ENCODE measurements at regions of chr9 and their contacts with region 1.

Region 1: DNA sequence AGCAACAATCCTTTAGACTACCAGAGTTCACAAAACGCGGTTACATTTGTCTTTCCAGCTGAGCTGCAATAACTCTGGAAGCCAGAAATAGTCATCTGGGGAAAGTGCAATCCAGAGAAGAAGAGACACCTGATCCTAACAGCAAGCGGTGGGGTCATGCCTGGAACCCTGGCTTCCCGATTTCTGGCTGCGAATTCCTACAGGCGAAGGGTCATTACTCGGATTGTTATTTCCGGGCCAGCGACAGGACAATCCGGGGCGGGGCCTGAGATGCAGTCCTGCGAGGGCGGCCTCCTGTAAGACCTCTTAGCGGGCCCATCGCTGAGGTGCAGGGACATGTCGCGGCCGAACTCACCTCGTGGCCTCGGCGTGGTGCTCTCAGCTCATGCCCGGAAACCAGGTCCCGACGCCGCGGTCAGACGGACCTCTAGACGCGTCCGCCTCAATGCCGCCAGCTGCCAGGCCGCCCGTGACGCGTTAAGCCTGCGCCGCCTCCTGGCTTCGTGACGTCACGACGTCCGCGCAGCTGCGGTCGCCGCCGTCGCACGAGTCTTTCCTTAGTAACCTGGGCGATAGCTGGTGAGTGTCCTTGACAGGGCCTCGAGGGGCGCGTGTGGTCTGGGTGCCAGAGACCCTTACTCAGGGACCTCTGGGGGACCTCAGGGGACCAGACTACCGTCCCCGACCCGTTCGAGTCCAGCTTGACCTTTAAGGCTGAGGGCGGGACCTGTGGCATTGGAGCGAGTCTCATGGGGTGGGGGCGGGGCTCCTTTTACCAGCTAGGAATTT is at the starts of genes MRRF and RBM18:
- DNase-seq: peak; percentile 73 to 96 (median 82)
- ATAC-seq: peak; percentile 82
- H3K4me3 ChIP-seq: peak within 1 kb of the TSS; percentile 86
- H3K4me3 Mint-ChIP-seq: peak within 1 kb of the TSS; percentile 90
- H3K27ac ChIP-seq: peak within 1 kb of the TSS; percentile 89 to 97
- H3K27ac Mint-ChIP-seq: peak within 1 kb of the TSS; percentile 94
- H3K4me1 ChIP-seq: peaks cover 29% of the 10 kb centered on the region
- H3K4me1 Mint-ChIP-seq: peaks cover 71% of the 10 kb centered on the region
- H3K27me3 ChIP-seq: no peaks in the 10 kb centered on the region
- H3K27me3 Mint-ChIP-seq: no peaks in the 10 kb centered on the region
- CTCF ChIP-seq: no peak
- total RNA-seq, gene MRRF: 18.4 to 18.7 TPM
- total RNA-seq, gene RBM18: 25.9 to 27.0 TPM

Region 2: DNA sequence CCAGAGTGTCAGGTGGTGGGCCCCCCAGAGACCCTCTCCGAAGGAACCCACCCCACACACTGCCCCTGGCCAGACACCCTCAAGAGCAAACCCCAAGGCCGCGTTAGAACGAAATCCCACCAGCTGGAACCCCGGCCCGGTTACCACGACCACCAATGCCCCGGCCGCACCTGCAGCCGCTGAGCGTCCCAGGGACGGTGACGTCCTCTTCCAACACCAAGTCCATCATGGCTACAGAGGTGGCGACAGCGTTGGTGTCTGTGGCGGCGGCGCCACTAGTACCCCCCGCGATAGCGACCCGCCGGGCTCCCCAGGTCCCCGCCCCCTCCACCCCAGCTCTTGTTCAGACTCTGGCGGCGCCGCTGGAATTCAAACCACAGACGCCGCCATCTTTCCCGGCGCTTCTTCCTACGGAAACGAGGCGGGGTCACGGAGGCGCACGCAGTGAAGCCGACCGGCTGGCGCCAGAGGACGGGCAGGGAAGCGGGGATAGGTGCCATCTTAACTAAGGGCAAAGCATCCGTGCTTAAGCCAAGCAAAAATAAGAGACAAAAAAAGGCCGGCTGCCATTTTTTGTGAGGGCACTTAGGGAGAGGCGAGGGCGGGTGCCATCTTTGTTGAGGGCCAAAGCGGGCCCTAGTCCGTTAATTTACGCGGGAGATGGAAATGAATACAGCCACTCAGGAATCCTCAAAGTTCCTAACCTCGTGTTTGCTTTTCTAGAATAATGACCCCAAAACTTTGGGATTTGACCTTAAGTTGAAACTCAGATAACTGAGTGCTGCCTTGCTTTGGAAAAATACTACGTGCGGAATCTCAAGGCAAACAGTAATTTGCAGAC is 1684.6 kb before region 1 on chr9 and contains the start of gene CDK5RAP2:
- CTCF ChIA-PET with region 1: no interaction called
- POLR2A ChIA-PET with region 1: no interaction called
- intact Hi-C with region 1: loop called in 1 of 2 experiments (anchors 10 kb)
- DNase-seq: peak; percentile 84 to 98 (median 90)
- ATAC-seq: peak; percentile 98
- H3K4me3 ChIP-seq: peak within 1 kb of the TSS; percentile 84
- H3K4me3 Mint-ChIP-seq: peak within 1 kb of the TSS; percentile 99
- H3K27ac ChIP-seq: peak within 1 kb of the TSS; percentile 26 to 55
- H3K27ac Mint-ChIP-seq: peak within 1 kb of the TSS; percentile 92
- H3K4me1 ChIP-seq: peaks cover 29% of the 10 kb centered on the region
- H3K4me1 Mint-ChIP-seq: peaks cover 48% of the 10 kb centered on the region
- H3K27me3 ChIP-seq: no peaks in the 10 kb centered on the region
- H3K27me3 Mint-ChIP-seq: no peaks in the 10 kb centered on the region
- CTCF ChIP-seq: no peak
- total RNA-seq, gene CDK5RAP2: 55.0 to 56.0 TPM

Region 3: DNA sequence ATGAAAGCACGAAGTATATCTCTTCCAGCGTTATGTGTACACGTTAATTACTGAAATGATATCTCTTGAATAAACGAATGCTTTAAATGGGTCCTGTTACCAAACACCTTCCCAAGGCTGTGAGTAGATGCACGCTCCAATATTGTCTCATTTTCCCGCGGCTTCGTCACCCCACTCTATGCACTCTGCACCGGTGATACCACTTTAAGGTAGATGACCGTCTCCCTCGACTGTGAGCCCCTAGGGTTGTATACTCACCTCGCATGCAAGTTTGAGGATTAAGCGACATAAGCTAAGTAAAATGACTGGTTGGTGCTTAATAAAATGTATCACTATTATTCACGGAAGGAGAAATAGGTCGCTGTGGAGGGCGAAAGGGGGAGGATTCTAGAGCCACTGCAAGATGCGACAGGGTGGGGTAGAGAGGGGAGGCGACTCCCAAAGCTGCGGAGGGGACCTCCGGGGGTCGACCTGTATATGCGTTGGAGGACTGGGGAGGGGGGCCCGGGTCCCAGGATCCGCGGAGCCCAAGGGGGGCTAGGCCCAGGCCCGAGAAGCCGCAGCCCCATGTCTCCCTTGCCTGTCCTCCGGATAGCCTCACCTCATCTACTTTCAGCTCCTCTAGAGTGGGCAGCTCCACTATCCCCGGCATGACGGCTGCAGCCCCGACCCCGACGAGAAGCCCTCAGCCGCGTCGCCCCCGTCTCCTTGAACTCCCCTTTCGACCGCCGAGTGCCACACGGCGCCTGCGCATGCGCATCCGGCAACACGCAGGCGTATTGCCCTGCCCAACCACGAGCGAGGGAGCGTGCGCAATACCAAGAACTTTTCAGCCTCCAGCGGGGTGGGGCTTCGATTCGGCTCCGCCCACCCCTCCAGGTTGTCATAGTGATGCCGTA is 105.3 kb before region 1 on chr9 and contains the starts of genes MORN5 and NDUFA8:
- CTCF ChIA-PET with region 1: no interaction called
- POLR2A ChIA-PET with region 1: interaction called, 5 read pairs
- intact Hi-C with region 1: loop called (anchors 1 to 2 kb)
- DNase-seq: peak; percentile 93 to 99 (median 96)
- ATAC-seq: peak; percentile 95
- H3K4me3 ChIP-seq: peak within 1 kb of the TSS; percentile 97
- H3K4me3 Mint-ChIP-seq: peak within 1 kb of the TSS; percentile 93
- H3K27ac ChIP-seq: peak within 1 kb of the TSS; percentile 68 to 73
- H3K27ac Mint-ChIP-seq: peak within 1 kb of the TSS; percentile 88
- H3K4me1 ChIP-seq: peaks cover 18% of the 10 kb centered on the region
- H3K4me1 Mint-ChIP-seq: peaks cover 45% of the 10 kb centered on the region
- H3K27me3 ChIP-seq: no peaks in the 10 kb centered on the region
- H3K27me3 Mint-ChIP-seq: peaks cover 17% of the 10 kb centered on the region
- CTCF ChIP-seq: no peak
- total RNA-seq, gene MORN5: not detected
- total RNA-seq, gene NDUFA8: 4.5 to 5.0 TPM

Region 4: GRCh38 chr9:122228568-122229484 is 35.7 kb before region 1 on chr9 and contains the start of gene LHX6:
- CTCF ChIA-PET with region 1: no interaction called
- POLR2A ChIA-PET with region 1: no interaction called
- intact Hi-C with region 1: no loop called
- DNase-seq: no peak
- ATAC-seq: no peak
- H3K4me3 ChIP-seq: no peak within 1 kb of the TSS
- H3K4me3 Mint-ChIP-seq: no peak within 1 kb of the TSS
- H3K27ac ChIP-seq: no peak within 1 kb of the TSS
- H3K27ac Mint-ChIP-seq: no peak within 1 kb of the TSS
- H3K4me1 ChIP-seq: peaks cover 4% of the 10 kb centered on the region
- H3K4me1 Mint-ChIP-seq: no peaks in the 10 kb centered on the region
- H3K27me3 ChIP-seq: peaks cover 31 to 70% of the 10 kb centered on the region in 2 experiments
- H3K27me3 Mint-ChIP-seq: peaks cover 40% of the 10 kb centered on the region
- CTCF ChIP-seq: no peak
- total RNA-seq, gene LHX6: not detected

Region 5: GRCh38 chr9:122821278-122821943 is 556.9 kb after region 1 on chr9:
- CTCF ChIA-PET with region 1: no interaction called
- POLR2A ChIA-PET with region 1: no interaction called
- intact Hi-C with region 1: loop called (anchors 5 to 10 kb)
- DNase-seq: peak in 1 of 14 experiments; percentile 33
- ATAC-seq: no peak
- H3K4me3 ChIP-seq: no peak overlapping the region
- H3K4me3 Mint-ChIP-seq: no peak overlapping the region
- H3K27ac ChIP-seq: no peak overlapping the region
- H3K27ac Mint-ChIP-seq: peak overlapping the region; percentile 55
- H3K4me1 ChIP-seq: peaks cover 25% of the 10 kb centered on the region
- H3K4me1 Mint-ChIP-seq: peaks cover 73% of the 10 kb centered on the region
- H3K27me3 ChIP-seq: no peaks in the 10 kb centered on the region
- H3K27me3 Mint-ChIP-seq: no peaks in the 10 kb centered on the region
- CTCF ChIP-seq: no peak

Region 6: GRCh38 chr9:122904823-122905710 is 640.5 kb after region 1 on chr9 and contains the start of gene RC3H2:
- CTCF ChIA-PET with region 1: no interaction called
- POLR2A ChIA-PET with region 1: no interaction called
- intact Hi-C with region 1: loop called in 1 of 2 experiments (anchors 10 kb)
- DNase-seq: peak; percentile 91 to 100 (median 94)
- ATAC-seq: peak; percentile 92
- H3K4me3 ChIP-seq: peak within 1 kb of the TSS; percentile 89
- H3K4me3 Mint-ChIP-seq: peak within 1 kb of the TSS; percentile 100
- H3K27ac ChIP-seq: peak within 1 kb of the TSS; percentile 87
- H3K27ac Mint-ChIP-seq: peak within 1 kb of the TSS; percentile 99
- H3K4me1 ChIP-seq: peaks cover 11% of the 10 kb centered on the region
- H3K4me1 Mint-ChIP-seq: peaks cover 36% of the 10 kb centered on the region
- H3K27me3 ChIP-seq: no peaks in the 10 kb centered on the region
- H3K27me3 Mint-ChIP-seq: no peaks in the 10 kb centered on the region
- CTCF ChIP-seq: no peak
- total RNA-seq, gene RC3H2: 85.2 to 86.8 TPM

Region 7: DNA sequence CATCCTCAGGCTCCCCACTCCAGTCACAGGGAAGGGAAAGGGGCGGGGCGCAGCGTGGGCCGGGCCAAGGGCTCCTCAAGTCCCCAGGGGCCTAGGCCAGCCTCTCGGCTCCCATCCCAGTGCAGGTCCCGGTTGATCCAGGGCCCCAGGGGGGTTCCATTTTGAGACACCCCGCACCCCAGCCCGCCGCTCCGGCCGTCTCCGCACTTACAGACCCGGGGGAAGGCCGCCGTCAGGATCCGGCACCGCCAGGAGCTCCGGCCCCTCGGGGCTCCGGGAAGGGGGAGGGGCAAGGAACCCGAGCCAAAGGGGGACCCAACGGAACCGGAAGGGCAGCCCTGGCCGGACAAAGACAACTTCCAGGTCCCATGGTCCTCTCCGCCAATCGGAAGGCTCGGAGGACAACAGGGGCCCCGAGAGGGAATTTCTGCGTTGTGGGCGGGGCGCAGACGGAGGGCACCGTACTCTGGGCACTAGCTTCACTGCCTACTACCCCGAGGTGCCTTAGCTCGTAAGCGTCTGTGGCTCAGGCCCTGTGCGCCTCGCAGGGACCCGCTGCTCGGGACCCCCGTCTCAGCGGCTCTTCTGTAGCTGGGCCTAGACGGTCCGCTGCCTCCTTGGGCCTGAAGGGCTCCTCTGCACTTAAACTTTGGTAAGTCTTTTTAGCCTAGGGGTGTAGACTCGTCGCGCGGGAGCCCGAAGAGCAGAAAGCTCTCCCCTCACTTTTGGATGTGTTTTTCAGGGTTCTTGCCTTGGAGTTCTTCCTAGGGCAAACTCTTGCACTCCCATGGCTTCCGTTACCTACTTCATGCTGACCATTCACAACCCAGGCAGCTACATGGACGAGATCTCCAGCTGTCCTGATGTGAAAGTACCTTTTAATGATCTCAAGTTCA is 666.9 kb after region 1 on chr9 and contains the start of gene ZBTB26:
- CTCF ChIA-PET with region 1: no interaction called
- POLR2A ChIA-PET with region 1: no interaction called
- intact Hi-C with region 1: loop called in 1 of 2 experiments (anchors 10 kb)
- DNase-seq: peak; percentile 68 to 95 (median 84)
- ATAC-seq: peak; percentile 97
- H3K4me3 ChIP-seq: peak within 1 kb of the TSS; percentile 66
- H3K4me3 Mint-ChIP-seq: peak within 1 kb of the TSS; percentile 95
- H3K27ac ChIP-seq: peak within 1 kb of the TSS; percentile 83 to 87
- H3K27ac Mint-ChIP-seq: no peak within 1 kb of the TSS
- H3K4me1 ChIP-seq: peaks cover 25% of the 10 kb centered on the region
- H3K4me1 Mint-ChIP-seq: peaks cover 33% of the 10 kb centered on the region
- H3K27me3 ChIP-seq: no peaks in the 10 kb centered on the region
- H3K27me3 Mint-ChIP-seq: no peaks in the 10 kb centered on the region
- CTCF ChIP-seq: no peak
- total RNA-seq, gene ZBTB26: 4.8 to 6.0 TPM